CD8-positive, alpha-beta memory T cell (primary cell): ENCODE measurements at regions of chr11 and their contacts with region 1.

Region 1: DNA sequence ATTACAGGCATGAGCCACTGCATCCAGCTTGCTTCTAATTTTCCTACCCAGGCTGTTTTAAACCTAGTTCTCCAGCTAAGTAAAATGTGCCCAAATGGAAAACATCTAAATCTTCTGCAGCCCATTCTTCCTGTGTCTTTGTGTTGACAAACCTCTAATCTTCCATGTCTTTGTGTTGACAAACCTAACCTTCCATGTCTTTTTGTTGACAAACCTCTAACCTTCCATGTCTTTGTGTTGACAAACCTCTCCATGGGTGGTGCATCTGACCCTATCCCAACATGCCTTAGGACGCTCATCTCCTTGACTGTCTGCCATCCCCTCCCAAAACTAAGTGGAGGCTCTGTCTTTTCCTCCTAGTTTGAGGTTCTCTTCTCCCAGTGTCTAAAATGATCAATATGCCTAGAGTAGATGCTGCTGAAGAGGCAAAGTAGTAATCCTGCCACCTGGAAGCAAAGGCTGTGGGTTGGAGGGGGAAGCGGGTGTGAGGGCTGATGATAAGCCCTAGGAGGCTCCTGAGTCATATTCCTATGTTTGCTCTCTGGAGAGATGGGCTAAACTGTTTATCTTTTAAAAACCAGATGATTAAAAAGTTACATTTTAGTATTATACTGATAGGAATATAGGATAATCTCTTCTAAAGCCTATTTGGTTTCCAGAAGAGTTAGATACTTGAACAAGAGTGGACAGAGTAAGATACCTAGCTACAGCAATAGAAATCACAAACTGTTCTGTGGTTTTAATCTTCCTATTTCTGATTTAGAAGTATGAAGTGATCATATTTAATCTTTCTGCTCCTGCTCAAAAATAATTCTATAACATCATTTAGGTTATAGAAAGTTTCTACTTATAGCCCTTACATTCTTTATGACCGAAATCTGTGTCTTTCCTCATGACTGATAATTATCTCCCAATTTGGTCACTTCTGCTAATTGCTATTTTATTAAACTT is 7.9 kb downstream of the FEN1 start:
- DNase-seq: no peak
- H3K4me3 ChIP-seq: no peak overlapping the region
- H3K4me3 Mint-ChIP-seq: no peak overlapping the region
- H3K27ac ChIP-seq: no peak overlapping the region
- H3K27ac Mint-ChIP-seq: peak overlapping the region in 2 of 8 donors; percentile 11 to 75
- H3K4me1 ChIP-seq: no peaks in the 10 kb centered on the region
- H3K4me1 Mint-ChIP-seq: peaks cover 5 to 10% (median 5%) of the 10 kb centered on the region in 3 donors
- H3K27me3 ChIP-seq: no peaks in the 10 kb centered on the region
- H3K27me3 Mint-ChIP-seq: no peaks in the 10 kb centered on the region

Region 2: GRCh38 chr11:61816736-61817455 is 16.3 kb after region 1 on chr11 and contains the start of gene FADS1:
- CTCF ChIA-PET with region 1: interaction called, 31 read pairs
- POLR2A ChIA-PET with region 1: interaction called, 12 read pairs
- DNase-seq: peak; percentile 51 to 75 (median 60)
- H3K4me3 ChIP-seq: peak within 1 kb of the TSS; percentile 82
- H3K4me3 Mint-ChIP-seq: peak within 1 kb of the TSS; percentile 87 to 97 (median 90)
- H3K27ac ChIP-seq: peak within 1 kb of the TSS; percentile 85
- H3K27ac Mint-ChIP-seq: peak within 1 kb of the TSS in 6 of 8 donors; percentile 24 to 96 (median 88)
- H3K4me1 ChIP-seq: peaks cover 10% of the 10 kb centered on the region
- H3K4me1 Mint-ChIP-seq: peaks cover 11 to 25% (median 16%) of the 10 kb centered on the region in 3 donors
- H3K27me3 ChIP-seq: peaks cover 3% of the 10 kb centered on the region
- H3K27me3 Mint-ChIP-seq: peaks cover 29 to 34% of the 10 kb centered on the region in 2 donors
- total RNA-seq, gene FADS1: 6.3 TPM

Region 3: GRCh38 chr11:62033191-62034044 is 232.8 kb after region 1 on chr11:
- CTCF ChIA-PET with region 1: no interaction called
- POLR2A ChIA-PET with region 1: no interaction called
- DNase-seq: no peak
- H3K4me3 ChIP-seq: no peak overlapping the region
- H3K4me3 Mint-ChIP-seq: no peak overlapping the region
- H3K27ac ChIP-seq: no peak overlapping the region
- H3K27ac Mint-ChIP-seq: peak overlapping the region in 7 of 8 donors; percentile 17 to 77 (median 68)
- H3K4me1 ChIP-seq: no peaks in the 10 kb centered on the region
- H3K4me1 Mint-ChIP-seq: peaks cover 0 to 12% (median 7%) of the 10 kb centered on the region in 3 donors
- H3K27me3 ChIP-seq: no peaks in the 10 kb centered on the region
- H3K27me3 Mint-ChIP-seq: peaks cover 4 to 6% of the 10 kb centered on the region in 2 donors